ENCODE measurements at regions of chr15 and their contacts with region 1.

Region 1: GRCh38 chr15:43204016-43204901 is 16.6 kb downstream of the EPB42 start:
- DNase-seq: peak; percentile 58
- H3K4me3 ChIP-seq: no peak overlapping the region
- H3K27ac ChIP-seq: no peak overlapping the region
- H3K4me1 ChIP-seq: peaks cover 8% of the 10 kb centered on the region
- H3K27me3 ChIP-seq: no peaks in the 10 kb centered on the region
- CTCF ChIP-seq: peak; percentile 65 to 73

Region 2: DNA sequence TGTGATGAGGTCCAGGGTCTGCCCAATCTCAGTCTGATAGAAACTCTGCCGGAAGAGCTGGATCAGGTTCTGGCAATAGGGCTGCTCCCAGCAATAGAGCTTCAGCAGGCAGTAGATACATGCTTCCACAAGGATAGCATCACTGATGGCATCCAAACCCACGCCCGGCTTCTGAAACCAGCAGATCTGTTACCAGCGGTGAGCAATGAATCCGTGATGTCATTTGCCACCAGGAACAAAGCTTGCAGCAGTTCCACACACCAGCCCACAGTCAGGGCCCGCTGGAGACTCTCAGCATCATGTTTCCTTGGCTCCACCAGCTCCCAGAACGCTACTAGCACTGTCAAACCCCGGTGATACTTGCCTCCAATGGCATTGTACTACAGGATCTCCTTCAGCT is 264.4 kb before region 1 on chr15:
- CTCF ChIA-PET with region 1: no interaction called
- dilution Hi-C with region 1: no loop called
- in situ Hi-C with region 1: no loop called
- intact Hi-C with region 1: loop called (anchors 5 kb)
- DNase-seq: no peak
- H3K4me3 ChIP-seq: no peak overlapping the region
- H3K27ac ChIP-seq: no peak overlapping the region
- H3K4me1 ChIP-seq: peaks cover 9% of the 10 kb centered on the region
- H3K27me3 ChIP-seq: no peaks in the 10 kb centered on the region
- CTCF ChIP-seq: no peak

Region 3: DNA sequence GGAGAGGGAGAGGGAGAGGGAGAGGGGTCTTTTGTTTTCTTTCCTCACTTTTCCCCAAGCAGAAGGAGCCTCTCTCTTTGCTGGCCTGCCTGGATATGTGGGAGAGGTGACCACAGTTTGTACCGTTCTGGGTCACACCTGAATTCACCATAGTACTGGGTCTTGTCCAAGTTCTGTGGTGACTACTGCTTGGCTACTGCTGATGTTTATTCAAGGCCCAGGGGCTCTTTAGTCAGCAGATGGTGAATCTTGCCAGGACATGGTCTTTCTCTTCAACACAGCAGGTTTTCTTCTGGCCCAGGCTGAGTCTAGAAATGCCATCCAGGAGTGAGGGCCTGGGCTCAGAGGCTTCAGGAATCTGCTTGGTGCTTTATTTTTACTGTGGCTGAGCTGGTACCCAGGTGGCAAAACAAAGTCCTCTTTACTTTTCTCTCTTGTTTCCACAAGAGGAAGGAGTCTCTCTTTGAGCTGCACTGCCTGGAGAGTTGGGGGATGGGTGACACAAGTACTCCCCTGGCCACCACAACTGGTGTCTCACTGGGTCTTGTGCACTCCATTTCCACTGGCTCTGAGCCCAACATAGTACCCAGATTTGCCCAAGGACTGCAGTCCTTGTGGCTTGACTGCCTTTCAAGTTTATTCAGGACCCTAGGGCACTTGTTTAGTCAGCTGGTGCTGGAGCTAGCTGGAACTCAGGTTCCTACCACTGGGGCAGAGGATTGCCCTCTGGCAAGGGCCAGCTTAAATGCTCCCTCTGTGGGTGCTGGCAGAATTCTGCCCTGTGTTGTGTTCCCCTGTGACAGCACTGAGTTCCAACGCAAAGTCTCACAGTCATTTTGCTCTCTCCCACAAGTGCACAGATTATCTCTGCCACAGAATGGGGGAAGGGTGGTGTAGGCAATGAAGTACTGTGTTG is 35.8 kb before region 1 on chr15:
- CTCF ChIA-PET with region 1: interaction called, 13 read pairs
- dilution Hi-C with region 1: no loop called
- in situ Hi-C with region 1: no loop called
- intact Hi-C with region 1: no loop called
- DNase-seq: peak; percentile 95
- H3K4me3 ChIP-seq: no peak overlapping the region
- H3K27ac ChIP-seq: peak overlapping the region; percentile 59
- H3K4me1 ChIP-seq: peaks cover 24% of the 10 kb centered on the region
- H3K27me3 ChIP-seq: no peaks in the 10 kb centered on the region
- CTCF ChIP-seq: peak in 1 of 2 donors; percentile 16